Naive thymus-derived CD4-positive, alpha-beta T cell (primary cell): ENCODE measurements at regions of chr11 and their contacts with region 1.

Region 1: DNA sequence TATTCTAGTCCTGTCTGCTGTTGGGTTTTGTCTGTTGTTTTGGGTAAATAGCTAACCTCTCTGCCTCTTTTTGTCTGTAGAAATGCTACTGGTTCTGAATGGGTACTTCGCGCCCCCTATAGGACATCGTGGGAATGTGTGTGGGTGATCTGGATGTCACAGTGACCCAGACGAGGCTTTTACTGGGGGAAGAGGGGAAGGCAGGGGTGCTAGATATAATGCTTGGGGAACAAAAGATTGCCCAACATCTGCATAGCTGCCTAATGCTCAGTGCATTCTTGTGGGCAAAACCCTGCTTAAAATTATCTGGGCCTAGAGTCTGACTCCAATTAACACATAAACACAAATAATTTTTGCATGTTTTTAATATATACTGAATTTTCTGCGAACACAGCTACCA is 57.7 kb downstream of the BMAL1 start:
- DNase-seq: peak; percentile 19 to 75 (median 67)
- ATAC-seq: peak; percentile 84
- H3K4me3 ChIP-seq: no peak overlapping the region
- H3K4me3 Mint-ChIP-seq: no peak overlapping the region
- H3K27ac ChIP-seq: no peak overlapping the region
- H3K27ac Mint-ChIP-seq: peak overlapping the region in 4 of 9 donors; percentile 0 to 19 (median 2)
- H3K4me1 ChIP-seq: peaks cover 21 to 37% of the 10 kb centered on the region in 2 donors
- H3K4me1 Mint-ChIP-seq: peaks cover 40 to 84% (median 81%) of the 10 kb centered on the region in 7 donors
- H3K27me3 ChIP-seq: no peaks in the 10 kb centered on the region
- H3K27me3 Mint-ChIP-seq: no peaks in the 10 kb centered on the region

Region 2: GRCh38 chr11:12963792-12964536 is 371.4 kb before region 1 on chr11:
- CTCF ChIA-PET with region 1: interaction called, 5 read pairs
- POLR2A ChIA-PET with region 1: no interaction called
- intact Hi-C with region 1: loop called in 1 of 2 experiments (anchors 1 kb)
- DNase-seq: peak; percentile 13 to 59 (median 39)
- ATAC-seq: peak; percentile 76
- H3K4me3 ChIP-seq: no peak overlapping the region
- H3K4me3 Mint-ChIP-seq: peak overlapping the region in 1 of 10 donors; percentile 5
- H3K27ac ChIP-seq: no peak overlapping the region
- H3K27ac Mint-ChIP-seq: no peak overlapping the region
- H3K4me1 ChIP-seq: no peaks in the 10 kb centered on the region
- H3K4me1 Mint-ChIP-seq: no peaks in the 10 kb centered on the region
- H3K27me3 ChIP-seq: no peaks in the 10 kb centered on the region
- H3K27me3 Mint-ChIP-seq: peaks cover 17 to 37% (median 30%) of the 10 kb centered on the region in 5 donors

Region 3: GRCh38 chr11:13210424-13210823 is 124.9 kb before region 1 on chr11:
- CTCF ChIA-PET with region 1: interaction called, 15 read pairs
- POLR2A ChIA-PET with region 1: no interaction called
- intact Hi-C with region 1: loop called (anchors 1 kb)
- DNase-seq: peak in 3 of 9 donors; percentile 7 to 9 (median 8)
- ATAC-seq: no peak
- H3K4me3 ChIP-seq: no peak overlapping the region
- H3K4me3 Mint-ChIP-seq: no peak overlapping the region
- H3K27ac ChIP-seq: no peak overlapping the region
- H3K27ac Mint-ChIP-seq: peak overlapping the region in 1 of 9 donors; percentile 32
- H3K4me1 ChIP-seq: peaks cover 0 to 6% of the 10 kb centered on the region in 2 donors
- H3K4me1 Mint-ChIP-seq: peaks cover 16 to 33% (median 23%) of the 10 kb centered on the region in 7 donors
- H3K27me3 ChIP-seq: no peaks in the 10 kb centered on the region
- H3K27me3 Mint-ChIP-seq: peaks cover 0 to 3% (median 0%) of the 10 kb centered on the region in 5 donors

Region 4: GRCh38 chr11:13249996-13250395 is 85.3 kb before region 1 on chr11:
- CTCF ChIA-PET with region 1: interaction called, 6 read pairs
- POLR2A ChIA-PET with region 1: no interaction called
- intact Hi-C with region 1: loop called in 1 of 2 experiments (anchors 1 kb)
- DNase-seq: no peak
- ATAC-seq: no peak
- H3K4me3 ChIP-seq: no peak overlapping the region
- H3K4me3 Mint-ChIP-seq: no peak overlapping the region
- H3K27ac ChIP-seq: no peak overlapping the region
- H3K27ac Mint-ChIP-seq: no peak overlapping the region
- H3K4me1 ChIP-seq: no peaks in the 10 kb centered on the region
- H3K4me1 Mint-ChIP-seq: no peaks in the 10 kb centered on the region
- H3K27me3 ChIP-seq: peaks cover 0 to 9% of the 10 kb centered on the region in 2 donors
- H3K27me3 Mint-ChIP-seq: peaks cover 7 to 22% (median 14%) of the 10 kb centered on the region in 5 donors

Region 5: GRCh38 chr11:13287036-13287435 is 48.3 kb before region 1 on chr11:
- CTCF ChIA-PET with region 1: interaction called, 10 read pairs
- POLR2A ChIA-PET with region 1: no interaction called
- intact Hi-C with region 1: no loop called
- DNase-seq: peak in 3 of 9 donors; percentile 15 to 32 (median 28)
- ATAC-seq: peak; percentile 84
- H3K4me3 ChIP-seq: no peak overlapping the region
- H3K4me3 Mint-ChIP-seq: peak overlapping the region in 2 of 10 donors; percentile 6 to 9
- H3K27ac ChIP-seq: no peak overlapping the region
- H3K27ac Mint-ChIP-seq: peak overlapping the region in 4 of 9 donors; percentile 11 to 64 (median 30)
- H3K4me1 ChIP-seq: peaks cover 8 to 27% of the 10 kb centered on the region in 2 donors
- H3K4me1 Mint-ChIP-seq: peaks cover 61 to 95% (median 85%) of the 10 kb centered on the region in 7 donors
- H3K27me3 ChIP-seq: no peaks in the 10 kb centered on the region
- H3K27me3 Mint-ChIP-seq: no peaks in the 10 kb centered on the region

Region 6: GRCh38 chr11:13440100-13440855 is 105.0 kb after region 1 on chr11:
- CTCF ChIA-PET with region 1: no interaction called
- POLR2A ChIA-PET with region 1: no interaction called
- intact Hi-C with region 1: no loop called
- DNase-seq: no peak
- ATAC-seq: no peak
- H3K4me3 ChIP-seq: no peak overlapping the region
- H3K4me3 Mint-ChIP-seq: no peak overlapping the region
- H3K27ac ChIP-seq: no peak overlapping the region
- H3K27ac Mint-ChIP-seq: peak overlapping the region in 1 of 9 donors; percentile 10
- H3K4me1 ChIP-seq: peaks cover 0 to 3% of the 10 kb centered on the region in 2 donors
- H3K4me1 Mint-ChIP-seq: peaks cover 4 to 71% (median 56%) of the 10 kb centered on the region in 7 donors
- H3K27me3 ChIP-seq: no peaks in the 10 kb centered on the region
- H3K27me3 Mint-ChIP-seq: no peaks in the 10 kb centered on the region

Region 7: DNA sequence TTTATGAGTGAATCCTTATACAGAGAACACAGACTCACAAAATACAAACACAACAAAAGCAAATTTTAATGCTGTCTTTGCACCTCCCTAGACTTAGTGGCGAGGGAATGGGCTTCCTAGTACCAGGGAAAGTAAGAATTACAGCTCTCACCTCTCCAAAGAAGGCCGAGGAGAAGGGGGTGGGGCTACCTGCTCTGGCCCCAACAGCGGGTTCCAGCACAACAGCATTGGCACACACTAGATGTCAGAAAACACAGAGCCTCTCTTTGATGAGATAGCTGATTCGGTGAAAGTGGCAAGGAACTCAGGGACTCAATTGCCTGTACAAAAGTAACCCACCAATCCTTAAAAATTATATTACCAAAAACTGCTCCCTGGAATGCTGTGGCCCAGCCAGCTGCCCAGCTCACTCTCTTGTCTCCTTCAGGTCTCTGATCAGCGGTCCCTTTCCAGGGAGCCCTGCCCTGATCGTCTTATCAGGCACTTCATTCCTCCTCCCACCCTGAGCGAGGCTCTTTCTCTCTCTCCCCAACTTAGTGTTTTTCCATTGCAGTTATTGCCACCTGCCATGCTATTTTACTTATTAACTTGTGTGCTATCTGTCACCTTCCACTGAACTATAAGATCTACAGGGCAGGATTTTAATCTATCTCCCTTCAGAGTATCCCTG is 657.9 kb after region 1 on chr11:
- CTCF ChIA-PET with region 1: no interaction called
- POLR2A ChIA-PET with region 1: no interaction called
- intact Hi-C with region 1: no loop called
- DNase-seq: no peak
- ATAC-seq: no peak
- H3K4me3 ChIP-seq: no peak overlapping the region
- H3K4me3 Mint-ChIP-seq: no peak overlapping the region
- H3K27ac ChIP-seq: no peak overlapping the region
- H3K27ac Mint-ChIP-seq: no peak overlapping the region
- H3K4me1 ChIP-seq: no peaks in the 10 kb centered on the region
- H3K4me1 Mint-ChIP-seq: no peaks in the 10 kb centered on the region
- H3K27me3 ChIP-seq: no peaks in the 10 kb centered on the region
- H3K27me3 Mint-ChIP-seq: peaks cover 0 to 35% (median 0%) of the 10 kb centered on the region in 5 donors